ENCODE measurements at regions of chr1 and their contacts with region 1.

Region 1: DNA sequence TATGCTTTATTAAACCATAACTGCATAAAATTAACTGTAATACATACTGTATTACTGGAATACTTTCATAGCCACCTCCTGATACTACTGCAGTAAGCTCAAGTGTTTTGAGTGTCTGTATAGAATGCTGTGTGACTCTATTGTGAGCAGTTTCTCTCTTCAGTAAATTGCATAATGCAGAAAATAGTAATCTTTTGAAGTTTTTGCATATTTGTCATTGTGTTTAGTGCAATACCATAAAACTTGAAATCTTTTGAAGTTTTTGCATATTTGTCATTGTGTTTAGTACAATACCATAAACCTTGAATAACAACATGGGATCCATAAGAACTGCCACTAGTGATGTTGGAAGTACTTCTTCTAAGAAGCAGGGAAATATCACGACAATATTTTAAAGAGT is 11.2 kb downstream of the TPR start:
- DNase-seq: no peak
- H3K4me3 Mint-ChIP-seq: no peak overlapping the region
- H3K27ac Mint-ChIP-seq: no peak overlapping the region
- H3K4me1 Mint-ChIP-seq: peaks cover 13% of the 10 kb centered on the region
- H3K27me3 Mint-ChIP-seq: no peaks in the 10 kb centered on the region

Region 2: GRCh38 chr1:186330758-186331157 is 33.1 kb before region 1 on chr1:
- CTCF ChIA-PET with region 1: interaction called, 10 read pairs
- DNase-seq: no peak
- H3K4me3 Mint-ChIP-seq: no peak overlapping the region
- H3K27ac Mint-ChIP-seq: no peak overlapping the region
- H3K4me1 Mint-ChIP-seq: peaks cover 1% of the 10 kb centered on the region
- H3K27me3 Mint-ChIP-seq: no peaks in the 10 kb centered on the region

Measured in activated naive CD4-positive, alpha-beta T cell treated with anti-CD3 and anti-CD28 coated beads, Interleukin-2, amount 10 ng/mL, durations not matched to agents 7 days and 5 days (primary cell).